ENCODE measurements at regions of chr2 and their contacts with region 1.

Region 1: DNA sequence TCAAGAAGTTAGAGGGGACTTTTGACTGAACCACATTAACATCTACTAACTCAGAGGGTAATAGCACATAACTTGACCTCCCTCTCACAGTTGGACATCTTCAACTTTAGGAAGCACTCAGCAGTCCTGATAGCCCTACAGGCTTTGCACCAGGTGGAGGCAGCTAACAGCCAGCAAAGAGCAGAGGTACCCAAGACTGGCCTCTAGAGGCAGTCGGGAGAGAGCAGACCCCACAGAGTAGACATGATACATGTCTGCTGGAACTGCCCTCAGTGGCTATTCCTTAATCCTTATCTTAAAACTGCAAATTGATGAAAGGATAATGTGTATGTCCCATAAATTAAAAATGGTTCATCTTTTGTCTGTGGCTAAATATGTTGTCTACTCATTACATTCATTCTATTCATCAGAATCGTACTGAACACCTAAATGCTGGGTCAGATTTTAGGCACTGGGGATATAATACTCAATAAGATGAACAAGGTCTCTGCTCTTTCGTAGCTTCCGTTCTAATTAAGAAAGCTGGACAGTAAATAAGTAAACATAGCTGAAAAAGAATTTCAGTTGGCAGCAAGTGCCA is 49.8 kb downstream of the CAB39 start:
- DNase-seq: peak in 6 of 9 donors; percentile 13 to 32 (median 22)
- ATAC-seq: peak; percentile 80
- H3K4me3 ChIP-seq: no peak overlapping the region
- H3K4me3 Mint-ChIP-seq: no peak overlapping the region
- H3K27ac ChIP-seq: no peak overlapping the region
- H3K27ac Mint-ChIP-seq: peak overlapping the region in 5 of 9 donors; percentile 0 to 54 (median 23)
- H3K4me1 ChIP-seq: peaks cover 19 to 26% of the 10 kb centered on the region in 2 donors
- H3K4me1 Mint-ChIP-seq: peaks cover 44 to 73% (median 63%) of the 10 kb centered on the region in 7 donors
- H3K27me3 ChIP-seq: no peaks in the 10 kb centered on the region
- H3K27me3 Mint-ChIP-seq: no peaks in the 10 kb centered on the region

Region 2: DNA sequence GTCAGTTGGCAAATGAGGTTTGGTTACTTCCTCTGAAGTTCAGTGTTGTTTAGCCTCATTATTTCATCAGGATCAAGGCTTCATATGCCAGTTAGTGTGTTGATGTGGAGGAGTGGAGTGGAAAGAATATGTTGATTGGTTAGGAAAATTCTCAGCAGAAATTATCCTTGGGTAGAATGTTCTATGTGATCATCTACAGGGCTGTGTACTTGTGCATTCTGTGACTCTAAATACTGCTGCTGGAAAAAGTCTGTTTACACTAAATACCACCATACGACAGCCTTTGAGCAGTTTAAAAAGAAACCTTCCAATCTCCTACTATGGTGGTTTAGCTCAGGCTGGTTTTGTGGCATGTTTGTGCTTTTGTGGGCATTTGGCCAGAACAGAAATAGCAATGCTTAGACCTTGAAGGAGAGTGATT is 24.0 kb before region 1 on chr2:
- CTCF ChIA-PET with region 1: no interaction called
- POLR2A ChIA-PET with region 1: no interaction called
- intact Hi-C with region 1: loop called in 1 of 2 experiments (anchors 2 kb)
- DNase-seq: no peak
- ATAC-seq: no peak
- H3K4me3 ChIP-seq: no peak overlapping the region
- H3K4me3 Mint-ChIP-seq: peak overlapping the region; percentile 1 to 63 (median 42)
- H3K27ac ChIP-seq: no peak overlapping the region
- H3K27ac Mint-ChIP-seq: peak overlapping the region in 8 of 9 donors; percentile 14 to 74 (median 42)
- H3K4me1 ChIP-seq: peaks cover 30 to 46% of the 10 kb centered on the region in 2 donors
- H3K4me1 Mint-ChIP-seq: peaks cover 56 to 88% (median 83%) of the 10 kb centered on the region in 7 donors
- H3K27me3 ChIP-seq: no peaks in the 10 kb centered on the region
- H3K27me3 Mint-ChIP-seq: no peaks in the 10 kb centered on the region

Region 3: GRCh38 chr2:230773039-230773773 is 10.8 kb after region 1 on chr2:
- CTCF ChIA-PET with region 1: no interaction called
- POLR2A ChIA-PET with region 1: no interaction called
- intact Hi-C with region 1: loop called in 1 of 2 experiments (anchors 1 kb)
- DNase-seq: peak in 6 of 9 donors; percentile 17 to 34 (median 26)
- ATAC-seq: peak; percentile 77
- H3K4me3 ChIP-seq: no peak overlapping the region
- H3K4me3 Mint-ChIP-seq: peak overlapping the region in 9 of 10 donors; percentile 6 to 70 (median 47)
- H3K27ac ChIP-seq: no peak overlapping the region
- H3K27ac Mint-ChIP-seq: peak overlapping the region in 7 of 9 donors; percentile 2 to 82 (median 40)
- H3K4me1 ChIP-seq: peaks cover 31 to 46% of the 10 kb centered on the region in 2 donors
- H3K4me1 Mint-ChIP-seq: peaks cover 74 to 99% (median 87%) of the 10 kb centered on the region in 7 donors
- H3K27me3 ChIP-seq: no peaks in the 10 kb centered on the region
- H3K27me3 Mint-ChIP-seq: no peaks in the 10 kb centered on the region

Measured in naive thymus-derived CD4-positive, alpha-beta T cell (primary cell).